PC-3 (cell line): ENCODE measurements at regions of chr4 and their contacts with region 1.

Region 1: GRCh38 chr4:37802068-37802666 is 24.3 kb upstream of the PGM2 start:
- DNase-seq: peak; percentile 84
- ATAC-seq: peak; percentile 99
- H3K4me3 ChIP-seq: peak overlapping the region; percentile 32; the same call in 1 of the 2 replicates
- H3K27ac ChIP-seq: no peak overlapping the region
- H3K4me1 ChIP-seq: no peaks in the 10 kb centered on the region
- H3K27me3 ChIP-seq: no peaks in the 10 kb centered on the region
- CTCF ChIP-seq: peak; percentile 80

Region 2: DNA sequence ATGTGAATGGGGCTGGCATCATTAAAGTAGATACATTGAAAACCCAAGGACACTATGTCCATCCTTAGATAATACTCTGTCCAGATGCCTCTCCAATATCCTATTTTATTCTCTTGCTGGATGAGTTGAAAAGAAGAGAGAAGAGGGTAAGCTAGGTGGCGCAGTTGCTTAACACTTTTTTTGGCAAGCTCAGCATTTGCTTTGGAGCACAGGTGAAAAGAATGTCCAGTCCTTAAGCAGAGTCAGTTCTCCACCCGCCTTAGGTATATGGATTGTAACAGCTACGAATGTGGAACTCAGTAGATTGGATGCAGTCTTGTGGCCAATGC is 349.3 kb before region 1 on chr4:
- CTCF ChIA-PET with region 1: no interaction called
- POLR2A ChIA-PET with region 1: no interaction called
- intact Hi-C with region 1: loop called (anchors 1 kb)
- DNase-seq: peak; percentile 87
- ATAC-seq: peak; percentile 68
- H3K4me3 ChIP-seq: peak overlapping the region; percentile 70
- H3K27ac ChIP-seq: no peak overlapping the region
- H3K4me1 ChIP-seq: peaks cover 25% of the 10 kb centered on the region; the same call in 1 of the 2 replicates
- H3K27me3 ChIP-seq: 0 out of 2 replicates have a peak, but pooled peaks cover 3% of the 10 kb centered on the region
- CTCF ChIP-seq: peak; percentile 77

Region 3: GRCh38 chr4:37686373-37687193 is 115.6 kb before region 1 on chr4 and contains the start of gene RELL1:
- CTCF ChIA-PET with region 1: interaction called, 3 read pairs
- POLR2A ChIA-PET with region 1: no interaction called
- intact Hi-C with region 1: loop called (anchors 5 kb)
- DNase-seq: peak; percentile 97
- ATAC-seq: peak; percentile 88
- H3K4me3 ChIP-seq: peak within 1 kb of the TSS; percentile 85
- H3K27ac ChIP-seq: no peak within 1 kb of the TSS
- H3K4me1 ChIP-seq: peaks cover 10% of the 10 kb centered on the region
- H3K27me3 ChIP-seq: no peaks in the 10 kb centered on the region
- CTCF ChIP-seq: no peak
- total RNA-seq, gene RELL1: 14.6 and 19.5 TPM in 2 replicates

Region 4: DNA sequence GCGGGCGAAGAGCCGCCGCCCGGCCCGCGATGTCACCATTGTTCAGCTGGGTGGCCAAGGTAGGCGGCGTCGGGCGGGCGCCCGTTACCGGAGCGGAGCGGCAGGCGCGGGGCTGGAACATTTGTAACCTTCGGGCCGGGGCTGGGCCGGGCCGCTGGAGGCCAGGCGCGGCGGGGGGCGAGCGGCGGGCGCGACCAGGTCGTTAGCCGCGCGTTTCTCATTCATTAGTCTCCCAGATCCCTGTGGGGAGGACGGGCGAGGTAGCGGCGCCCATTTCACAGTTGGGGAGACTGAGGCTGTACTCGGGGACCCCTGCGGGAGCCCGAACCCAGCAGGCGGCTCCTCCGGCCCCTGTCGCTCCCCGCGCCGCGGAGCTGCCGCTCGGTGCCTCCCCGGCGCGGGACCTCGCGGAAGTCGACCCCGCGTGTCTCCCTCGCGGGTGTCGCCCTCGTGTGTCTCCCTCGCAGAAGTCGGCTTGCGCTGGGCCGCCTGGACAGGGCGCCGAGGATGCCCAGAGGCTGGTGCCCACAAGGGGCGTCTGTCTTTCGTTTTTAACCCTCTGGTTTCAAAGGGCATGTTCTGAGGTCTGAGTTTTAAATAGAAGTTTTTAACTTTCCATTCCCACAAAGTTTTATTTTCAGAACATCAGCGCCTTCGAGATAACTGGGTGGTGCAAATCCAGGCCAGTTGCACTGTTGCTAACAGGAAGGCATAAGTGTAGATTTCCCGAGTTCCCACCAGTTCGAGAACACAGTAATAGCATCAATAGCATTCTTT is 175.5 kb after region 1 on chr4:
- CTCF ChIA-PET with region 1: interaction called, 3 read pairs
- POLR2A ChIA-PET with region 1: no interaction called
- intact Hi-C with region 1: loop called (anchors 10 kb)
- DNase-seq: peak; percentile 50
- ATAC-seq: peak; percentile 84
- H3K4me3 ChIP-seq: peak overlapping the region; percentile 67
- H3K27ac ChIP-seq: 0 out of 2 replicates have a peak overlapping the region, but pooled peaks have one; percentile 5
- H3K4me1 ChIP-seq: peaks cover 10% of the 10 kb centered on the region
- H3K27me3 ChIP-seq: no peaks in the 10 kb centered on the region
- CTCF ChIP-seq: peak; percentile 57

Region 5: GRCh38 chr4:38210391-38211114 is 408.4 kb after region 1 on chr4:
- CTCF ChIA-PET with region 1: no interaction called
- POLR2A ChIA-PET with region 1: no interaction called
- intact Hi-C with region 1: no loop called
- DNase-seq: no peak
- ATAC-seq: no peak
- H3K4me3 ChIP-seq: no peak overlapping the region
- H3K27ac ChIP-seq: no peak overlapping the region
- H3K4me1 ChIP-seq: no peaks in the 10 kb centered on the region
- H3K27me3 ChIP-seq: no peaks in the 10 kb centered on the region
- CTCF ChIP-seq: no peak

Region 6: GRCh38 chr4:38449506-38450174 is 647.5 kb after region 1 on chr4:
- CTCF ChIA-PET with region 1: no interaction called
- POLR2A ChIA-PET with region 1: no interaction called
- intact Hi-C with region 1: no loop called
- DNase-seq: no peak
- ATAC-seq: no peak
- H3K4me3 ChIP-seq: no peak overlapping the region
- H3K27ac ChIP-seq: no peak overlapping the region
- H3K4me1 ChIP-seq: no peaks in the 10 kb centered on the region
- H3K27me3 ChIP-seq: no peaks in the 10 kb centered on the region
- CTCF ChIP-seq: no peak